Caco-2 (cell line): ENCODE measurements at regions of chr6 and their contacts with region 1.

Region 1: GRCh38 chr6:87322304-87323212 is at the start of gene SMIM8:
- DNase-seq: peak; percentile 86 to 92
- H3K4me3 ChIP-seq: peak within 1 kb of the TSS; percentile 91
- H3K4me3 Mint-ChIP-seq: peak within 1 kb of the TSS; percentile 98
- H3K27ac Mint-ChIP-seq: peak within 1 kb of the TSS; percentile 92
- H3K4me1 ChIP-seq: peaks cover 5% of the 10 kb centered on the region; the same call in 1 of the 2 replicates
- H3K4me1 Mint-ChIP-seq: no peaks in the 10 kb centered on the region
- H3K27me3 ChIP-seq: no peaks in the 10 kb centered on the region
- H3K27me3 Mint-ChIP-seq: no peaks in the 10 kb centered on the region
- CTCF ChIP-seq: peak; percentile 84 to 95
- total RNA-seq, gene SMIM8: 8.5 and 8.7 TPM in 2 replicates

Region 2: GRCh38 chr6:87261534-87261933 is 61.0 kb before region 1 on chr6:
- CTCF ChIA-PET with region 1: no interaction called
- POLR2A ChIA-PET with region 1: no interaction called
- intact Hi-C with region 1: no loop called
- DNase-seq: no peak
- H3K4me3 ChIP-seq: no peak overlapping the region
- H3K4me3 Mint-ChIP-seq: no peak overlapping the region
- H3K27ac Mint-ChIP-seq: no peak overlapping the region
- H3K4me1 ChIP-seq: no peaks in the 10 kb centered on the region
- H3K4me1 Mint-ChIP-seq: no peaks in the 10 kb centered on the region
- H3K27me3 ChIP-seq: no peaks in the 10 kb centered on the region
- H3K27me3 Mint-ChIP-seq: no peaks in the 10 kb centered on the region
- CTCF ChIP-seq: no peak

Region 3: GRCh38 chr6:87341899-87342298 is 19.3 kb after region 1 on chr6:
- CTCF ChIA-PET with region 1: no interaction called
- POLR2A ChIA-PET with region 1: no interaction called
- intact Hi-C with region 1: loop called (anchors 2 kb)
- DNase-seq: no peak
- H3K4me3 ChIP-seq: no peak overlapping the region
- H3K4me3 Mint-ChIP-seq: no peak overlapping the region
- H3K27ac Mint-ChIP-seq: no peak overlapping the region
- H3K4me1 ChIP-seq: peaks cover 25% of the 10 kb centered on the region
- H3K4me1 Mint-ChIP-seq: peaks cover 24% of the 10 kb centered on the region
- H3K27me3 ChIP-seq: no peaks in the 10 kb centered on the region
- H3K27me3 Mint-ChIP-seq: no peaks in the 10 kb centered on the region
- CTCF ChIP-seq: no peak

Region 4: GRCh38 chr6:87472525-87473418 is 150.2 kb after region 1 on chr6 and contains the start of gene SLC35A1:
- CTCF ChIA-PET with region 1: no interaction called
- POLR2A ChIA-PET with region 1: no interaction called
- intact Hi-C with region 1: loop called (anchors 2 kb)
- DNase-seq: peak; percentile 73 to 86
- H3K4me3 ChIP-seq: peak within 1 kb of the TSS; percentile 84
- H3K4me3 Mint-ChIP-seq: peak within 1 kb of the TSS; percentile 84
- H3K27ac Mint-ChIP-seq: peak within 1 kb of the TSS; percentile 93
- H3K4me1 ChIP-seq: no peaks in the 10 kb centered on the region
- H3K4me1 Mint-ChIP-seq: no peaks in the 10 kb centered on the region
- H3K27me3 ChIP-seq: no peaks in the 10 kb centered on the region
- H3K27me3 Mint-ChIP-seq: peaks cover 2% of the 10 kb centered on the region
- CTCF ChIP-seq: peak; percentile 14 to 25
- total RNA-seq, gene SLC35A1: 12.3 and 12.7 TPM in 2 replicates

Region 5: GRCh38 chr6:88662653-88663174 is 1340.2 kb after region 1 on chr6:
- CTCF ChIA-PET with region 1: no interaction called
- POLR2A ChIA-PET with region 1: no interaction called
- intact Hi-C with region 1: no loop called
- DNase-seq: no peak
- H3K4me3 ChIP-seq: no peak overlapping the region
- H3K4me3 Mint-ChIP-seq: no peak overlapping the region
- H3K27ac Mint-ChIP-seq: no peak overlapping the region
- H3K4me1 ChIP-seq: no peaks in the 10 kb centered on the region
- H3K4me1 Mint-ChIP-seq: no peaks in the 10 kb centered on the region
- H3K27me3 ChIP-seq: no peaks in the 10 kb centered on the region
- H3K27me3 Mint-ChIP-seq: no peaks in the 10 kb centered on the region
- CTCF ChIP-seq: no peak